Endothelial cell of umbilical vein (primary cell): ENCODE measurements at regions of chr4 and their contacts with region 1.

Region 1: DNA sequence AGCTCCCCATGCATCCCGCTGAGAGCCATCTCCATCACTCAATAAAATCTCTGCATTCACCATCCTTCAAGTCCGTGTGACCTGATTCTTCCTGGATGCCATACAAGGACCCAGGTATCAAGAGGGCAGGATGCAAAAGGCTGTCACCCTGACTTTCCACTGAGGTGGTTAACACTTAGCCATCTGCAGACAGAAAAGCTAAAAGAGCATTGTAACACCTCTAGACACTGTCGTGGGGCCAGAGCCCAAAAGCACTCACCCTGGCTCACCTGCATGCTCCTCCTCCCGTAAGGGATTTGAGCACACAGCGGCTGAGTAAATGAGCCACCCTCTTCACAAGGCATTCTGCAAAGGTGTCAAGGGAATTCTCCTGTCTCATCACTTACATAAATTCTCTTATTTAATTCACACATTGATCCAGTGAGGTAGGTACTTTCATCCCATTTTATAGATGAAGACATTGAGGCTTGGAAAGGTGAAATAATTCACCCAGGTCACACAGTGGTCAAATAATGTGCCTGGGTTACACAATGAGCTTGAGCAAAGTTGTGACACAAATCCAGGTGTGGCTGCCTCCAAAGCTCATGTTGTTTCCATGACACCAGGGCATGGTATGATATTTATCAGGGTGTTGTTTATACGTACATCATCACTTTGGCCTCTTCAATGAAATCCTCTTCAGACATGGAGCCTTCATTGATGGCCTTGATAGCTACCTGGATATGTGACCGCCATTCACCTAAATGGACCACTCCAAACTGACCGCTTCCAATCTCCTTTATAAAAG is 48.0 kb downstream of the TXK start:
- DNase-seq: no peak
- H3K4me3 ChIP-seq: no peak overlapping the region
- H3K27ac ChIP-seq: no peak overlapping the region
- H3K4me1 ChIP-seq: peaks cover 7% of the 10 kb centered on the region
- H3K27me3 ChIP-seq: no peaks in the 10 kb centered on the region
- CTCF ChIP-seq: no peak
- POLR2A ChIP-seq: no peak

Region 2: DNA sequence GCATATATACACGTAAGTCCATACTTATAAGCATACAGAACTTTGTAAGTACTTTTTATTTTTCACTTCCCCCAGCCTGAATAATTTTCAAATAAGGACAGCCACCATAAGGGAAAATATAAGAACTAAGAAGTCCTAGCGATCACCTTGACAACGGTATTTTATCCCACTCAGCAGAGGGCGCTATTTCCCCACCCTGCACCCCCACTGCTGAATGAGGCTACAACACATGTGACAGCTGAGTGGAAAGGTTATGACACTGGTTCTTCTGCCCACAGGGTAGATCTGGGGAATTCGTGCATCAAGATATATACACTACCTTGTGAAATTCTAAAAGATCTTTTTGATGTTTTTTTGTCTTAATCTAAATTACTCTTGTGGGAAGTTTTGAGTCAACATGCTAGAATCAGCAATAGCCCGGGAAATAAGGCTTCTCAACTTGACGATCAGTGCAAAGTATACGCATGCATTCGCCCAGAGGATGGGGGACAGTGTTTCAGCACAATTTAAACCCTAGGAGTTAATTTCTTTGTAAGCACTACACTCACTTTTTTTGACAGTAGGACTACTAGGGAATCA is 399.6 kb before region 1 on chr4:
- CTCF ChIA-PET with region 1: interaction called, 3 read pairs
- POLR2A ChIA-PET with region 1: no interaction called
- dilution Hi-C with region 1: no loop called
- intact Hi-C with region 1: loop called (anchors 1 kb)
- DNase-seq: peak; percentile 62
- H3K4me3 ChIP-seq: no peak overlapping the region
- H3K27ac ChIP-seq: no peak overlapping the region
- H3K4me1 ChIP-seq: no peaks in the 10 kb centered on the region
- H3K27me3 ChIP-seq: peaks cover 2 to 17% of the 10 kb centered on the region in 2 experiments
- CTCF ChIP-seq: peak; percentile 72 to 73
- POLR2A ChIP-seq: no peak

Region 3: GRCh38 chr4:47914220-47914925 is 171.6 kb before region 1 on chr4 and contains the start of gene NFXL1:
- CTCF ChIA-PET with region 1: interaction called, 6 read pairs
- POLR2A ChIA-PET with region 1: no interaction called
- dilution Hi-C with region 1: no loop called
- intact Hi-C with region 1: loop called (anchors 5 kb)
- DNase-seq: peak; percentile 97
- H3K4me3 ChIP-seq: peak within 1 kb of the TSS; percentile 73 to 93 (median 83)
- H3K27ac ChIP-seq: peak within 1 kb of the TSS; percentile 54
- H3K4me1 ChIP-seq: peaks cover 17% of the 10 kb centered on the region
- H3K27me3 ChIP-seq: no peaks in the 10 kb centered on the region
- CTCF ChIP-seq: no peak
- POLR2A ChIP-seq: peak; percentile 93
- total RNA-seq, gene NFXL1: 11.8 and 14.6 TPM in 2 replicates

Region 4: GRCh38 chr4:47926639-47927258 is 159.3 kb before region 1 on chr4:
- CTCF ChIA-PET with region 1: interaction called, 7 read pairs
- POLR2A ChIA-PET with region 1: no interaction called
- dilution Hi-C with region 1: no loop called
- intact Hi-C with region 1: loop called (anchors 1 kb)
- DNase-seq: peak; percentile 49
- H3K4me3 ChIP-seq: no peak overlapping the region
- H3K27ac ChIP-seq: no peak overlapping the region
- H3K4me1 ChIP-seq: peaks cover 3% of the 10 kb centered on the region
- H3K27me3 ChIP-seq: peaks cover 7 to 19% of the 10 kb centered on the region in 2 experiments
- CTCF ChIP-seq: peak; percentile 69
- POLR2A ChIP-seq: no peak

Region 5: DNA sequence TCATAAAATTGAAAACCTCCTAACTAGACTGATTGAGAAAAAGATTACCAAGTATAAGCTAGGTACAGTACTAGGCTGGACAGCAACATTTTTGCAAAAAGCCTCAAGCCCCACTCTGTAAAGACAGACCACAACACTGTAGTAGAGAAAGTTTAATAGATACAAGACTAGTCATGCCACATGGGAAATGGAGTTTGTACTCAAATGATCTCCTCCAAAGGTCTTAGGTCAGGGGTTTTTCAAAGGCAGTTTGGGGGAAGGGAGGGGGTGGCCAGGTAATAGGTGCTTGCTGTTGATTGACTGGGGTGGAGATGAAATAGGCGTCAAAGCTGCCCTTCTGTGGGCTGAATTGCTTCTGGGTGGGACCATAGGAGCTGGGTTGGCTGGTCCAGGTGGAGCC is 83.7 kb before region 1 on chr4:
- CTCF ChIA-PET with region 1: interaction called, 57 read pairs
- POLR2A ChIA-PET with region 1: no interaction called
- dilution Hi-C with region 1: no loop called
- intact Hi-C with region 1: loop called (anchors 1 kb)
- DNase-seq: no peak
- H3K4me3 ChIP-seq: no peak overlapping the region
- H3K27ac ChIP-seq: no peak overlapping the region
- H3K4me1 ChIP-seq: no peaks in the 10 kb centered on the region
- H3K27me3 ChIP-seq: no peaks in the 10 kb centered on the region
- CTCF ChIP-seq: no peak
- POLR2A ChIP-seq: no peak

Region 6: DNA sequence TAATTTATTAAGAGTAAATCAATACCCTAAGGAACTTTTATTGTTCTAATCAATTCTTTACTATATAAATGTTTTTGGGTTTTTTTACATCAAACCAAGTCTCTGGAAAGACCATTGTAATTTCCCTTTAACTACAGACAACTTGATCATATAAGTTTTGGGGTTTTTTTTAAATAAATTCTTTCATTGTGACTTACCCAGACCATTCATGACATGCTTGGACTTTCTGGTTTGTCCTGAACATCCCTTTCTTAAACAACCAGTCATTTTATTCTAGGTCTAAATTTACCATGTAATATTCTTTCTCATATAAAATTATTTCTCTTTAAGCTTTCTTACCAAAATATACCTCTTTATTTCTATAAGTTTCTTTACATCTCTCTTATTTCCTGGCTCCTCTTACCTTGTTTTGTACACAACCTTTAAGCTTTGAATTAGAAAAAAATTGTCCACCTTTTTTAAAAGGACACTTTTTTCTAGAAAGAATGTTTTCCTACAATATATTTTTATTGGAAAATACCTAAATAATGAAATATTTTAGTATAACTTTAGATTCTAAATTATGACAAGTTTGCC is 77.9 kb before region 1 on chr4:
- CTCF ChIA-PET with region 1: interaction called, 57 read pairs
- POLR2A ChIA-PET with region 1: interaction called, 4 read pairs
- dilution Hi-C with region 1: no loop called
- intact Hi-C with region 1: loop called (anchors 1 kb)
- DNase-seq: no peak
- H3K4me3 ChIP-seq: no peak overlapping the region
- H3K27ac ChIP-seq: no peak overlapping the region
- H3K4me1 ChIP-seq: no peaks in the 10 kb centered on the region
- H3K27me3 ChIP-seq: no peaks in the 10 kb centered on the region
- CTCF ChIP-seq: no peak
- POLR2A ChIP-seq: no peak

Region 7: DNA sequence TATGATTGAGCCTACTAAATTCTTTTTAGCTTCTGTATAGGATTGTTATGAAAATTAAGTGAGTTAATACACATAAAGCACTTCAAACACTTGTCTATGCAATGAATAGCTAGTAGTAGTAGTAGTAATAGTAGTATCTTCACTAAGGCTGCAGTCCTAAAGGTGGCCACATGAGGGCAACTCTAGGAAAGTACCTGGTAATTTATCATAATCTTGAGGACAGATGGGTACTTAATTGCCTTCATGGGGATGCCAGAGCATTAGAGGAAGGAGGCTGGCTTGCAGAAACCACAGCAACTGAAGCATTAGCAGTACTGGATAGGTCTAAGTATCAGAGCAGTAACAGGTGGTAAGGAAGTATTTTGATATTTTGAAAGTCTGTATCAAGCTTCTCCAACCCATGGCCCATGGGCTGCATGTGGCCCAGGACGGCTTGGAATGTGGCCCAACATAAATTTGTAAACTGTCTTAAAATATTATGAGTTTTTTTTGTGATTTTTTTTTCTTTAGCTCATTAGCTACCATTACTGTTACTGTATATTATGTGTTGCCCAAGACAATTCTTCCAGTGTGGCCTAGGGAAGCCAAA is 52.1 kb before region 1 on chr4:
- CTCF ChIA-PET with region 1: interaction called, 42 read pairs
- POLR2A ChIA-PET with region 1: no interaction called
- dilution Hi-C with region 1: no loop called
- intact Hi-C with region 1: loop called (anchors 1 kb)
- DNase-seq: peak; percentile 53
- H3K4me3 ChIP-seq: no peak overlapping the region
- H3K27ac ChIP-seq: no peak overlapping the region
- H3K4me1 ChIP-seq: no peaks in the 10 kb centered on the region
- H3K27me3 ChIP-seq: no peaks in the 10 kb centered on the region
- CTCF ChIP-seq: peak; percentile 48 to 53
- POLR2A ChIP-seq: no peak